Activated naive CD4-positive, alpha-beta T cell treated with anti-CD3 and anti-CD28 coated beads for 36 hours (primary cell): ENCODE measurements at regions of chr10 and their contacts with region 1.

Region 1: DNA sequence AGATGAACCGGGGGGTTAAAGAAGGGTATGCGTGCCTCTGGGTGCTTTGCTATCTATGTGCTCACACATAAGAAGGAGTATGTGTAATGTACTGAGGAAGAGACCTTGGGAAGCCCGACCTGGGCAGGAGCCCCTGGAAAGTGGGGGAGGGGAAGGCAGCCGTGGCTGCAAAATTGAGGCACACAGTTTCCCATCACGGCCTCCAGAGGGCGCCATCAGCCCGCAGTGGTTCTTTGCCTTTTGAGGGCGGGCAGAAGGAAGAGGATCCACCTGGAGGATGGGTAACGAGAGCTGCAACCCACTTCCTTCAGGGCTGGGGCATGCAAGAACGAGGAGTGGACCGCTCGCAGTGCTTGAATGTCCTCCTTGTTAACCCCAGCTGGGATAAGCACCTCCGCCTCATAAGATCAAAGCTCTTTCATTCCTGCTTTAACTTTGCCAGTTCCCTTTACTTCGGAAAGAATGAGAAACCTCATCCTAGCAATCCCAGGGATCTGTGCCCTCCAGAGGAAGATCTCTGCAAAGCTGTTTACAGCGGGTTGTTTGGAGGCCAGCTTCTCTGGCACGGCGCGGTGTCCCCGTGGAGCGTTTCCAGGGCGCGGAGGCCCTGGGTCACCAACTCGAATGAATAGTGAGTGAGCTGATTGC is 77.9 kb downstream of the PCGF5 start:
- DNase-seq: peak; percentile 90
- H3K4me3 Mint-ChIP-seq: peak overlapping the region; percentile 71
- H3K27ac Mint-ChIP-seq: no peak overlapping the region
- H3K4me1 Mint-ChIP-seq: peaks cover 8% of the 10 kb centered on the region
- H3K27me3 Mint-ChIP-seq: peaks cover 2% of the 10 kb centered on the region

Region 2: DNA sequence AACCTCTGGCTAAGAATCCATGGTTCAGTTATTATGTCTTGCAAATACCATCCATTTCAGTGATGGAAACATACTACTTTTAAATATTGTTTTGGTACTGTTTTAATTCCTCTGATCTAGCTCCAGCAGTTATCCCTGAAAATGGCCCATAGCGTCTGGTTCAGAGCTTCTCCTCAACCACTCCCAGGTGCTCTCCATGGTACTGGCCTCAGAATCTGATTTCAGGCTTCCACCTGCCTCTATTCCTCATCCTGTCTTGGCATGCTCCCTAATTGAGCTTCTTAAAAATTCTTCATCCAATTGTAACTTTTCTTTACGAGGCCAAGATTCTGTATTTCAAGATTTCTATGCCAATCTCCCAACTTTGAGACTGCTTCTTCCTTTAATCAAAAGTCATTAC is 676.8 kb before region 1 on chr10:
- CTCF ChIA-PET with region 1: no interaction called
- intact Hi-C with region 1: no loop called
- DNase-seq: no peak
- H3K4me3 Mint-ChIP-seq: no peak overlapping the region
- H3K27ac Mint-ChIP-seq: no peak overlapping the region
- H3K4me1 Mint-ChIP-seq: no peaks in the 10 kb centered on the region
- H3K27me3 Mint-ChIP-seq: peaks cover 4% of the 10 kb centered on the region

Region 3: DNA sequence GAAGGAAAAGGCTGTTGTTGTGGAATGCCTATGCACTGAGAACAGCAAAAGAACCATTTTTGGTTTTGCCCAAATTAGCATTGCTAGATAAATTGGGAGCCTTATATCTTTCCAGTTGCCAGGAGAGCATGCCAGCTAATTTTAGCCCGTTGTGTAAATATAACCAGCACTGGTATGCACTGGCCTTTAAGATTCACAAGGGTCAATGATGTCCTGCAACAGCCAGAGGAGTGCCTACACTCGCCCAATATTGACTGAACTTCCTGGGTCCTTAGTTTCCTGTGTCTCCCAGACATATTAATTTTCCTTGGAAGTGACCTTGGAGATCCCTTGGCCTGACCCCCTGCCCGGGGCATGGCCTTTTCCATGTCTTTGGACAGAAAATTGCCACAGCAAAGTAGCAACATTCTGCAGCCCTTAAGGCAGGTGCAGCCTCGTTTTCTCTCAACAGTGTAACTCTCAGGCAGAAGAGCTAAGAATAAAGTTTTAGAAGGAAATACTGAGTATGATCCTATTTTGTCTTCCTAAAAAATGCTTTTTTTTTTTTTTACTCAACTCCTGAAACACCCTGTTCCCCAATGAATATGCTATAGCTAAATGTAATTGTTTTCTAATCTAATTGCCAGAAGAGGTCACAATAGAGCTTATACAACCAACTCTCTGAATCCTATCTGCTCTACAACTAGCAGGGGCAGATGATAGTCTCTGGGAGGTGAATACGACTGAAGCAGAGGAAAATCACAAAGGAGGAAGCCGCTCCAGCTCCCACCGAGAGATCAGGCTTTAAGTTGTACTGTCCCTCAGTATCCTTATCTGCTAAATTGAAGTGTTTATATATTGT is 209.8 kb before region 1 on chr10:
- CTCF ChIA-PET with region 1: interaction called, 4 read pairs
- intact Hi-C with region 1: loop called (anchors 2 kb)
- DNase-seq: no peak
- H3K4me3 Mint-ChIP-seq: no peak overlapping the region
- H3K27ac Mint-ChIP-seq: no peak overlapping the region
- H3K4me1 Mint-ChIP-seq: no peaks in the 10 kb centered on the region
- H3K27me3 Mint-ChIP-seq: no peaks in the 10 kb centered on the region

Region 4: GRCh38 chr10:91335147-91335546 is 36.8 kb after region 1 on chr10:
- CTCF ChIA-PET with region 1: interaction called, 8 read pairs
- intact Hi-C with region 1: loop called (anchors 2 kb)
- DNase-seq: peak; percentile 38
- H3K4me3 Mint-ChIP-seq: no peak overlapping the region
- H3K27ac Mint-ChIP-seq: no peak overlapping the region
- H3K4me1 Mint-ChIP-seq: no peaks in the 10 kb centered on the region
- H3K27me3 Mint-ChIP-seq: peaks cover 1% of the 10 kb centered on the region

Region 5: GRCh38 chr10:91389636-91390512 is 91.5 kb after region 1 on chr10:
- CTCF ChIA-PET with region 1: interaction called, 18 read pairs
- intact Hi-C with region 1: loop called (anchors 1 kb)
- DNase-seq: no peak
- H3K4me3 Mint-ChIP-seq: no peak overlapping the region
- H3K27ac Mint-ChIP-seq: no peak overlapping the region
- H3K4me1 Mint-ChIP-seq: peaks cover 4% of the 10 kb centered on the region
- H3K27me3 Mint-ChIP-seq: peaks cover 12% of the 10 kb centered on the region

Region 6: DNA sequence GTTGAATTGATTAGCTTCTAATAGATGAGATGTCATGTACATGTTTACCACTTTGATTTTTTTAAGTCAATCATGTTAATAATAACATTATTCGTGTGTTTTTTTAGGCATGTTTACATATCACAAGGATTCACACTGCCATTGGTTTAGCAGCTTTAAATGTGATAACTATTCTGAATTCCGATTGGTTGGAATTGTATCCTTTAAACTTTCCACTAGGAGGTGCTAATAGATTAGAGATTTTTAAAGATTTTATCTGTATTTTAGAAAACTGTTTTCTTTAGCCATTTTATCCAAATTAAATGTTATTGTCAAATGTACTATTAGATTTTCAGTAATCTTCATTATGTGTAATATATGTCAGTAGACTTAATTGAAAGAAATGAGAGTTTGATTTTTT is 195.0 kb after region 1 on chr10:
- CTCF ChIA-PET with region 1: no interaction called
- intact Hi-C with region 1: no loop called
- DNase-seq: no peak
- H3K4me3 Mint-ChIP-seq: no peak overlapping the region
- H3K27ac Mint-ChIP-seq: no peak overlapping the region
- H3K4me1 Mint-ChIP-seq: no peaks in the 10 kb centered on the region
- H3K27me3 Mint-ChIP-seq: no peaks in the 10 kb centered on the region

Region 7: GRCh38 chr10:91551856-91552255 is 253.5 kb after region 1 on chr10:
- CTCF ChIA-PET with region 1: interaction called, 14 read pairs
- intact Hi-C with region 1: loop called (anchors 1 kb)
- DNase-seq: peak; percentile 26
- H3K4me3 Mint-ChIP-seq: no peak overlapping the region
- H3K27ac Mint-ChIP-seq: no peak overlapping the region
- H3K4me1 Mint-ChIP-seq: no peaks in the 10 kb centered on the region
- H3K27me3 Mint-ChIP-seq: no peaks in the 10 kb centered on the region

Region 8: GRCh38 chr10:91694170-91694794 is 395.9 kb after region 1 on chr10:
- CTCF ChIA-PET with region 1: interaction called, 16 read pairs
- intact Hi-C with region 1: loop called (anchors 1 kb)
- DNase-seq: peak; percentile 37
- H3K4me3 Mint-ChIP-seq: no peak overlapping the region
- H3K27ac Mint-ChIP-seq: no peak overlapping the region
- H3K4me1 Mint-ChIP-seq: peaks cover 4% of the 10 kb centered on the region
- H3K27me3 Mint-ChIP-seq: peaks cover 5% of the 10 kb centered on the region

Region 9: GRCh38 chr10:91908337-91909116 is 610.2 kb after region 1 on chr10:
- CTCF ChIA-PET with region 1: interaction called, 14 read pairs
- intact Hi-C with region 1: loop called (anchors 1 kb)
- DNase-seq: peak; percentile 77
- H3K4me3 Mint-ChIP-seq: peak overlapping the region; percentile 90
- H3K27ac Mint-ChIP-seq: peak overlapping the region; percentile 74
- H3K4me1 Mint-ChIP-seq: peaks cover 20% of the 10 kb centered on the region
- H3K27me3 Mint-ChIP-seq: peaks cover 7% of the 10 kb centered on the region